K562 (cell line): ENCODE measurements at regions of chr11 and their contacts with region 1.

Region 1: DNA sequence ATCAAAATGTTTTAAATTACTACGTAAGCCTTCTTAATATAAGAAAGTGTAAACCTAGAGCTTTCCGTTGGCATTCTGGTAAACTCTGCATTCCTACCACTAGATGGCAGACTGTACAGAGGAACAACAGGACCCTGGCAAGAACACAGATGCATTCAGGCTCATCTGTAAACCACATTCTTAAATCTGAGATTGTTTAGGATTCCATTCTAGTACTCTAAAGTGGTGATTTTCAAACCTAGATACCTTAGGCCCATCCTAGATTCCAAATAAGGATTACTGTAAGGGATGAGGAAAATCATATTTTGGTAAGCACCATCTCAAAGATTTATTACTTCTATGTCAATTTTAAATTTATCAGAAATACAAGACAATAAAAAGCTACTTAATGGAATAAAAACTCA is 26.9 kb downstream of the PICALM start:
- DNase-seq: peak; percentile 70 to 86 (median 75)
- ATAC-seq: peak; percentile 63
- H3K4me3 ChIP-seq: no peak overlapping the region
- H3K27ac ChIP-seq: peak overlapping the region; percentile 45; the same call in 1 of the 3 replicates
- H3K4me1 ChIP-seq: peaks cover 6 to 37% of the 10 kb centered on the region in 2 experiments; a peak in 4 of 5 replicates
- H3K27me3 ChIP-seq: no peaks in the 10 kb centered on the region
- CTCF ChIP-seq: peak; percentile 69 to 89 (median 78)
- EP300 ChIP-seq: no peak
- POLR2A ChIP-seq: no peak
- RAD21 ChIP-seq: peak; percentile 80 to 84

Region 2: GRCh38 chr11:85844426-85845129 is 197.4 kb before region 1 on chr11:
- CTCF ChIA-PET with region 1: no interaction called
- POLR2A ChIA-PET with region 1: no interaction called
- in situ Hi-C with region 1: no loop called
- intact Hi-C with region 1: no loop called
- DNase-seq: no peak
- ATAC-seq: no peak; the same call in 2 of the 3 replicates
- H3K4me3 ChIP-seq: no peak overlapping the region
- H3K27ac ChIP-seq: no peak overlapping the region
- H3K4me1 ChIP-seq: no peaks in the 10 kb centered on the region
- H3K27me3 ChIP-seq: no peaks in the 10 kb centered on the region
- CTCF ChIP-seq: no peak
- EP300 ChIP-seq: no peak
- POLR2A ChIP-seq: no peak
- RAD21 ChIP-seq: no peak

Region 3: GRCh38 chr11:86052693-86053641 is 11.0 kb after region 1 on chr11:
- CTCF ChIA-PET with region 1: no interaction called
- POLR2A ChIA-PET with region 1: interaction called, 22 read pairs
- in situ Hi-C with region 1: no loop called
- intact Hi-C with region 1: no loop called
- DNase-seq: no peak
- ATAC-seq: peak; percentile 34
- H3K4me3 ChIP-seq: no peak overlapping the region
- H3K27ac ChIP-seq: peak overlapping the region; percentile 56
- H3K4me1 ChIP-seq: peaks cover 11 to 44% of the 10 kb centered on the region in 2 experiments
- H3K27me3 ChIP-seq: no peaks in the 10 kb centered on the region
- CTCF ChIP-seq: no peak
- EP300 ChIP-seq: no peak
- POLR2A ChIP-seq: no peak
- RAD21 ChIP-seq: no peak

Region 4: DNA sequence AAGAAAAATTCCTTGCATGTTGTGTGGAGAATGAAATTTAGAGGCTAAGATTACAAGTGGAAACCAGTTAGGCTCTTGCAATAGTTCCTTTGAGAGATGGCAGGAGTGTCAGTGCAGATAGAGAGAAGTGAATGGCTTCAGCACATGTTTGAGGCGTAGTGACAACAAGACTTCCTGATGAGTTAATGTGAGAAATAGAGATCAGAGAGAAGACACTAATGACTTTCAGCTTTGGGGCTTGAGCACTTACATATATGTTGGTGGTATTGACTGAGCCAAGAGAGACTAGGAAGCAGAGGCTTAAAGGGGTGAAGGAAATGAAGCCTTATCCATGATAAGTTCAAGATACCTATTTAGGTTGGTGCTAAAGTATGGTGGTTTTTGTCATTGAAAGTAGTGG is 82.9 kb after region 1 on chr11:
- CTCF ChIA-PET with region 1: no interaction called
- POLR2A ChIA-PET with region 1: no interaction called
- in situ Hi-C with region 1: no loop called
- intact Hi-C with region 1: loop called (anchors 5 kb)
- DNase-seq: no peak
- ATAC-seq: peak; percentile 22; the same call in 2 of the 3 replicates
- H3K4me3 ChIP-seq: no peak overlapping the region
- H3K27ac ChIP-seq: no peak overlapping the region
- H3K4me1 ChIP-seq: peaks cover 0 to 25% of the 10 kb centered on the region in 2 experiments; a peak in 3 of 5 replicates
- H3K27me3 ChIP-seq: no peaks in the 10 kb centered on the region
- CTCF ChIP-seq: no peak
- EP300 ChIP-seq: no peak
- POLR2A ChIP-seq: no peak
- RAD21 ChIP-seq: no peak

Region 5: DNA sequence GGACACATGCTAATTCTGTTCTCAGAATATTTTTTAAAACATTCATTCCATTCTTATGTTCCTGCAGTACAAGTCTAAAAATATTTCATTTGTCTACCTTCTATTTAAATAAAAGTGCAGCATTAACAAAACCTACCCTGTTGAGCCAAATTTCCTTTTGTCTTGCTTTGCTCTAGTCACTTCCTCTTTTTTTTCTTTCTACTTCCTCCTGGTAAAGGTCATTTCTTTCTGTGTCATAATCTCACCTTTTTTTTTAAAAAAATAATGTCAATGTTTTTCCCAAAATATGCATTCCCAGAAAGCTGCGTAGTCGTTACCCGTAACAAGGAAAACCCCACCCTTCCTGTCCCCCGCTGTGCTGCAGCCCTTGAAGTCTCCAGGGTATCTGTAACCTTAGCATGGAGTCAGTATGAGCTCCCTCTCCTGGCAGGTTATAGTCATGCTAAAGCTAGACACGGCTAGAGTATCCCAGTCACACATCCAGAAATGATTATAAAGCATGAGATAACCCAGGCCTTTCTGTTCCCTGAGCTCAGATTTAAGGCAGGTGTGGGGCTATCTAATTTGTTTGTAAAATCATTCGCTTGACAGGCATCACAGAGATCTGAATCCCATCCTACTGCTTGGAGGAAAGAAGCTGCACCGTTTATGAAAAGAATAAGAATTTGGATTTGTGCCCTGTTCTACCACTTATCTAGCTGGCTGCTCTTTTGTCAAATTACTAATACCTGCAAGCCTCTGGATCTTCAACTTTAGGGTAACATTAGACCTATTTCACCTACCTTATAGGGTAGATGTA is 151.5 kb after region 1 on chr11:
- CTCF ChIA-PET with region 1: interaction called, 9 read pairs
- POLR2A ChIA-PET with region 1: no interaction called
- in situ Hi-C with region 1: no loop called
- intact Hi-C with region 1: loop called (anchors 1 kb)
- DNase-seq: peak; percentile 88 to 97 (median 90)
- ATAC-seq: peak; percentile 94
- H3K4me3 ChIP-seq: no peak overlapping the region
- H3K27ac ChIP-seq: peak overlapping the region; percentile 87
- H3K4me1 ChIP-seq: peaks cover 14 to 59% of the 10 kb centered on the region in 2 experiments
- H3K27me3 ChIP-seq: no peaks in the 10 kb centered on the region
- CTCF ChIP-seq: peak; percentile 80 to 92 (median 89)
- EP300 ChIP-seq: peak; percentile 94
- POLR2A ChIP-seq: no peak
- RAD21 ChIP-seq: peak; percentile 90 to 95

Region 6: DNA sequence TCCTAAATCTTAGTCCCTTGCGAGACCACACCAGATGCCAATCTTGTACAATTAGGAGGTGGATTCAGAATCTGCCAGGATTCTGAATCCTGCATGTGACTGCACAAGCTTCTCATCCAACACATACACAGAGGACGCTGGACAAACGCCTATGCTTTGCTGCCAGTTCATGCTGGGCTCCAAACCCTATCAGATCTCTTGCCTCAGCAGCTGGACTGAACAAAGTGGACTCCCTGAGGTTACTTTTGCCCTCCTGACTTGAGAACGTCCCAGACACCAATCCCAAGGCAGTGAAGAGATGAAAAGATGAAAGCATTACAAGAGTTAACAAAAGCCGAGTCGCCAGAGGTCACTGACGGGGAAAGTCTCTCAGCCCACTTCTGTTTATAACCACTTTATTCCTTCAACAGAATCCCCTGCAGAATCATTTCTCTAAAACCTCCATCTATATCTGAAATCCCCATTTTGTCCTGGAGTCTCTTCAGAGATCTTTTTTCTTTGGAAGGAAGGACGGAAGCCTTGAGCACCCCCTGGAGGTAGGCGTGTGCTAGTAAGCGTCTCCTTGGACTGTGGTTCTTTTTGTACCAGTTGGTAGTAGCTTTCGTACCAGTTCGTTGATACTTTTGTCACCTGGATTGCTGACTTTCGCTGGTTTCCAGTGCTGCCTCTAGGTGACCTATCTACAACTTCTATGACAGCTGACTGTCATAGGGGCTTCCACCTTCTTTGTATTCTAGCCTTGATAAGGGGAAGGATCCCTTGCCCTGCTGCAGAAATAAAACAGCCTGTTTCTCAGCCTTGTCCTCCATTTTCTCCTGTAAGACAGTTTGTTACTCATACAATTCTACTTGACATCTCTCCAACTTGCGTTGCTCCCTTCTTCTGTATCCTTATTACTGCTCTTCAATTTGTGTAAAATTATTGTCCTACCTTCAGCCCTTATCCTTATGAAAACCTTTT is 176.4 kb after region 1 on chr11:
- CTCF ChIA-PET with region 1: interaction called, 24 read pairs
- POLR2A ChIA-PET with region 1: no interaction called
- in situ Hi-C with region 1: no loop called
- intact Hi-C with region 1: loop called (anchors 1 kb)
- DNase-seq: peak; percentile 76 to 90 (median 83)
- ATAC-seq: peak; percentile 95
- H3K4me3 ChIP-seq: no peak overlapping the region
- H3K27ac ChIP-seq: peak overlapping the region; percentile 56; the same call in 2 of the 3 replicates
- H3K4me1 ChIP-seq: peaks cover 3 to 14% of the 10 kb centered on the region in 2 experiments; a peak in 3 of 5 replicates
- H3K27me3 ChIP-seq: no peaks in the 10 kb centered on the region
- CTCF ChIP-seq: peak; percentile 84 to 92 (median 92)
- EP300 ChIP-seq: no peak
- POLR2A ChIP-seq: no peak
- RAD21 ChIP-seq: peak; percentile 91 to 92